BJ (cell line): ENCODE measurements at regions of chr6 and their contacts with region 1.

Region 1: DNA sequence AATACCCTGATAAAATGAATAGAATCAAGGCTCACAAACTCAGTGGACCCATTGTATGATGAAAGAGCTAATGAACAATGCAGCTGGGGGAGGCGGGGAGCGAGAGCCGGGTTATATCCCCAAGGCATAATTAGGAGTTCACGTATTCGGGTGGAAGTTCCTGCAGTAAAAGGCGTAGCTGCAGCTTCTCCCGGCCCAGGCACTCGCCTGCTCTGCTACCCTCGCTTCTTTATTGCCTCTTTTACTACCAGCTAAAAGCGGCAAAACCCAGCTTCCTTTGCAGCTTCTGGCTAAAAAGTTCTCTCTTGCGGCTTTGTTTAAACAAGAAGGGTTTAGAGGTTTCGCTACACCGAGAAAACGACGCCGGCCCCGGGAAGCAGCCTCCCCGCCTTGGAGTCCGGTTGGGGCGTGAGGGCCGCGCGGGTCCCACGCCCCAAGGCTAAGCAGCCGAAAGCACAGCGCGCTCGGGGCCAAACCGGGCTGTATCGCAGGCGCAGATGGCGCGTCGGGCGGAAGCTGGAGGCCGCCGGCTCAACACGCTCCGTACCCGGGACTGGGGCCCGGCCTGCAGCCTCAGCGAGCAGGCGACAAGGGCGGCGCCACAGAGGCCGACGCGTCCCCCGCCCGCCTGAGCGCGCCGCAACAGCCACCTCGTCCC is 1.6 kb downstream of the ZBTB2 start:
- DNase-seq: peak; percentile 28
- H3K4me3 ChIP-seq: peak overlapping the region; percentile 73
- H3K27me3 ChIP-seq: no peaks in the 10 kb centered on the region
- CTCF ChIP-seq: no peak

Region 2: GRCh38 chr6:150930826-150931225 is 458.9 kb before region 1 on chr6:
- CTCF ChIA-PET with region 1: no interaction called
- POLR2A ChIA-PET with region 1: interaction called, 15 read pairs
- DNase-seq: peak; percentile 96
- H3K4me3 ChIP-seq: no peak overlapping the region
- H3K27me3 ChIP-seq: no peaks in the 10 kb centered on the region
- CTCF ChIP-seq: no peak

Region 3: DNA sequence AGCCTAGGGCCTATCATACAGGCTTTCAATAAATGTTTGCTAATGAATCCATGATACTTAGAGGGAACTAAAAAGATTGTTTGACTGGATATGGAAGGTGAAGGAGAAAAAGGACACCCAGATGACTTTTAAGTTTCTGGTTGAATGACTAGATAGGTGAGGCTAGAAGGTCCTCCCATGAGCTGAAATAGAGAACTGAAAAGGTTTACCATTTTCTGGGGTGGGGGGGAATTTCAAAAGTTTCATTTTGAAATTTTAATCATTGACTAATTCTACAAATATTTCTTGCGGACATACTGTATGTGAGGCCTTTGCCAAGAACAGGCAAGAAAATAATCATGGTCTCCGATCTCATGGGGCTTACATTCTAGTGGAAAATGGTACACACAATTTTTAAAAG is 19.5 kb after region 1 on chr6:
- CTCF ChIA-PET with region 1: interaction called, 12 read pairs
- POLR2A ChIA-PET with region 1: no interaction called
- DNase-seq: no peak
- H3K4me3 ChIP-seq: no peak overlapping the region
- H3K27me3 ChIP-seq: no peaks in the 10 kb centered on the region
- CTCF ChIP-seq: no peak